HEK293 (cell line): ENCODE measurements at regions of chr10 and their contacts with region 1.

Region 1: DNA sequence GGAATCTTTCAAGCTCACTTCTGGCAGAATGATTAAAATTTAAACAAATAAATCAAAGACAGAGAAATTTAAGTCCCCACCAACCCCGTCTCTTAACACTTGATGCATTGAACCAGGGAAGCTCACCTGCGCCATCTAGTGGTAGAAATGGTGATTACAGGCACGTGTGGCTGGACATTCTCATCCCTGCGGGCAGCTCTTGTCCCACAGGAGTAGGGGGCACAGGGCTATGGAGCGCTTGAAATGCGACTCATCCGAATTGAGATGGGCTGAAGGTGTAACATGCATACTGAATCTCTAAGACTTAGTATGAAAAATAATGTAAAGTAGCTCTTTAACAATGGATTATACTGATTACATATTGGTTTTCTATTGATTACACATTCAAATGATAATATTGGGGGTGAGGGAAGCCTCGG is 24.8 kb upstream of the SLIT1 start:
- H3K4me3 ChIP-seq: no peak overlapping the region
- H3K27ac ChIP-seq: no peak overlapping the region
- H3K4me1 ChIP-seq: no peaks in the 10 kb centered on the region
- CTCF ChIP-seq: peak; percentile 72

Region 2: GRCh38 chr10:96642973-96643372 is 567.6 kb before region 1 on chr10:
- CTCF ChIA-PET with region 1: interaction called, 15 read pairs
- POLR2A ChIA-PET with region 1: no interaction called
- H3K4me3 ChIP-seq: no peak overlapping the region
- H3K27ac ChIP-seq: no peak overlapping the region
- H3K4me1 ChIP-seq: no peaks in the 10 kb centered on the region
- CTCF ChIP-seq: no peak

Region 3: DNA sequence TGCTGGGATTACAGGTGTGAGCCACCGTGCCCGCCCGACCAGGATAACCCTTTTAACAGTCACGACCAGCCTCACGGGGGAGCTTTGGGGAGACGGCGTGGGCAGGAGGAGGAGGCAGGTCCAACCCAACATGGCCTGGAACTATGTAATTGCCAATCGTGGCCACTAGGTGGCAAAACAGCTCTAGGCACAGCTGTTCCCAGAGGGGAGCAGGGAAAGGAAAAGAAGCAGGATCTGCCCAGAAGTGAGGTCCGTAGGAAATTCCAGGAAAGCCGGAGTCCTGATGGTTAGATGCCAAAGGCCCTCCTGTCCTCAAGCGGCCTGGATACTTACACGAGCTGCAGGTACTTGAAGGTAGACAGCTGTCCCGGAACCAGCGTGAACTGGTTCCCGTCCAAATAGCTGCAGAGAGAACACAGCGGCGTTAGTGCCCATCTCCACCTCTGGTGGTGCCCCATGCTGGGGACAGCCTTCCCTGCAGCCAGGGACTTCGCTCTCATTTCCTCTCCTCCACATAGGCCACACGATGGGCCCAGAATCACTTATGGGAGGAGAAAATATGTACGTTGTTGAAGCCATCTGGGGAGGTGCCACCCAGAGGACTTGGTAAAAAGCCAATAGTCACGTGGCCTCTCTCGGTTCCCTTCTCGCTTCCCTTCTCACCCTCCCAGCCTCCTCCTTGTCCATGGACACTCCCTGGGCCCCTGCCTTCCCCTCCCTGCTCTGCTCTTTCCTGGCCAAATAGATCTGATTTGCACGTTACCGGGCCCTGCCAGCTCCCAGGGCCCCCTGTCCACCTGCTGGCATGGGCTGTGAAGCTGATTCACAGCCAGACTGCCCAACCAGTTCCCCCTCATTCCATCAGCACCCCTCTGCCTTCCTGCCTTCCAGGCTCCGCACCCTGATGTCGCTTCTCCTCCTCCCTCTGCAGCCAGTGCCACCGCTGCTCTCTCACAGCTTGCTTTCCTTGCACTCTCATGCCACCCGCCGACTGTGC is 172.9 kb before region 1 on chr10:
- CTCF ChIA-PET with region 1: interaction called, 61 read pairs
- POLR2A ChIA-PET with region 1: no interaction called
- H3K4me3 ChIP-seq: no peak overlapping the region
- H3K27ac ChIP-seq: no peak overlapping the region
- H3K4me1 ChIP-seq: no peaks in the 10 kb centered on the region
- CTCF ChIP-seq: peak; percentile 96

Region 4: GRCh38 chr10:97072851-97073665 is 137.5 kb before region 1 on chr10:
- CTCF ChIA-PET with region 1: interaction called, 188 read pairs
- POLR2A ChIA-PET with region 1: no interaction called
- H3K4me3 ChIP-seq: no peak overlapping the region
- H3K27ac ChIP-seq: no peak overlapping the region
- H3K4me1 ChIP-seq: no peaks in the 10 kb centered on the region
- CTCF ChIP-seq: peak; percentile 76

Region 5: DNA sequence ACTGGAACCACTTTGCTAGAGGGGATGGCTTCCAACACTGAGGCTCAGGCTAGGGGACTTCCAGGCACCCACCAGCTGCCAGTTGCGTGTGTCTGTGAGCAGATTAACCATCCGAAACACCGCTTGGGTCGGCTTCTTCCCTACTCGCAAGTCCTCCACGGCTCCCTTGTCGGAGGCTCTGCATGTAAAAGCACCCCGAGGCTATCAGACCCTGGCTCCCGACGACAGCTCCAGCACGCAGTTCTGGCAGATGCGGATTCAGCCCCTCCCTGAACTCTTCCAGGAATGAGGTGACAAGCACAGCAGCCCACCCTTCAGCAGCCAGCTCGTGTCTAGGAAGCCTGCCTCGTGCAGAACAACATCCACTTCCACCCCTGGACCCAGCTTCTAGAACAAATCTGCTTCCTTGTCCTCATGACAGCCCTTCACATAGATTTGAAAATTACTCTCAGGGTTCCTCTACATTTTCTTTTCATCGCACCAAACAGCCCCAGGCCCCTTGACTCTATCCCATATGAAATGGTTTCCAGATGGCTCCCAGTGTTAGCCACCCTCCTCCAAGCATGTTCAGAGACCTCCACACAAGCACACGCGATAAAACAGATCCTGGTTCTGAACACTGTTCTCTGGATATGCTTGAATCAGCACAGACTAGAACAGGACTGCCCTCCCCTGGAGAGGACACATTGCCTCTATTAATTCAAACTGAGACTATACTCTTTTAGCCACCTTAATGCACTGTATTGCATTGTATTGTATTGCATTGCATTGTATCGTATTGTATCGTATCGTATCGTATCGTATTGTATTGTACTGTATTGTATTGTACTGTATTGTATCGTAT is 69.4 kb before region 1 on chr10:
- CTCF ChIA-PET with region 1: interaction called, 11 read pairs
- POLR2A ChIA-PET with region 1: no interaction called
- H3K4me3 ChIP-seq: no peak overlapping the region
- H3K27ac ChIP-seq: no peak overlapping the region
- H3K4me1 ChIP-seq: no peaks in the 10 kb centered on the region
- CTCF ChIP-seq: no peak

Region 6: DNA sequence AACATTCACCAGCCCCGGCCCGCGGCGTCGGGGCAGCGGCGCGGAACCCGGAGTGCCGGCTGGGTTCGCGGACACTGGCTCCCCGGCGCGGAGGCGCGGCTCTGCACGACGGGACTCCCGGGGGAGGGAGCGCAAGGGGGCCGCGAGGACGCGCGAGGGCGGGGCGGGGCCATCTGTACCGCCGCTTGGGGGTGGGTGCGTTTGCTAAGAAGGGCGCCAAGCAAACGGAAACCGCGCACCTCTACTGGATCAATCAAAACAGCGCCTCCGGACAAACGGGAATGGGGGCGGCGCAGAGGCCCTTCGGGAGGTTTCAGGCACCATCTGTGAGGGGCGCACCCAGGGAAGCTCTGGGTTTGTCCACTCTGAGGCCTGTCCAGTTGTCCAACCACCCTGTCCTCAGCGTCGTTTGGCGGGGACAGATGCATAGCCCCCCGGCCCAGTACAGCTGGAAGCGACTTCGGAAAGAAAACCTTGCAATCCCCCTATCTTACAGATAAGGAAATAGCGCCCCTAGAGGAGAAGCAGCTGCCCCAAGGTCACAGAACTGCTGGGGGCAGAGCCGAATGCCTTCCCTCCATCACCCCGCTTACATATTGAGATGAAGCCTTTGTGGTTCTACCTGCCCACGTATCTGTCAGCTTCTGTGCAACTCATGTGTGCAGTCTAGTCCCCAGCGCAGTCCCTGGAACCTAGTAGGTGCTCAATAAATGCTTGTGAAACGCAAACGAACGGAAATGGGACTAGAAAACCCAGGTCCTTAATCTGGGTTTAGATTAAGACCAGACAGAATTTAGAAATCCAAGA is 14.1 kb before region 1 on chr10:
- CTCF ChIA-PET with region 1: interaction called, 170 read pairs
- POLR2A ChIA-PET with region 1: no interaction called
- H3K4me3 ChIP-seq: peak overlapping the region; percentile 48
- H3K27ac ChIP-seq: no peak overlapping the region
- H3K4me1 ChIP-seq: peaks cover 3% of the 10 kb centered on the region
- CTCF ChIP-seq: peak; percentile 78

Region 7: DNA sequence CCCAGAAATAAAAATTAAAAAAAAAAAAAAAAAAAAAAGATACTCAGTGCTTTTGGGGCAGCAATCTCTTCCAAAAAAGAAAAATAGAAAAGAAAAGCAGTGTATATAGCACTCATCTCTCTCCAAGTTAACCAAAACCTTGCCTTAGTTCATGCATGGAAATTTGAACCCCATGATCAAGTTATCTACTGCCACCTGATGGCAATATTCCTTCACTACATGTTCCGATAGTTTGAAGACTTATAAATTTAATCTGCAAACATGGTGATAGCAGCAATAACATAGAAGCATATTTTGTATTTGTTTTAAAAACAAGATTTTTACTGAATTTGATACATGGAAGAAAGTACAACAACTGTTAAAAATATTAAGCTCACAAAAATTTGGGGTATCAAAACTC is 23.8 kb after region 1 on chr10:
- CTCF ChIA-PET with region 1: interaction called, 38 read pairs
- POLR2A ChIA-PET with region 1: no interaction called
- H3K4me3 ChIP-seq: no peak overlapping the region
- H3K27ac ChIP-seq: no peak overlapping the region
- H3K4me1 ChIP-seq: no peaks in the 10 kb centered on the region
- CTCF ChIP-seq: 0 out of 2 replicates have a peak, but pooled peaks have one; percentile 21

Region 8: GRCh38 chr10:97407211-97407951 is 196.8 kb after region 1 on chr10:
- CTCF ChIA-PET with region 1: no interaction called
- POLR2A ChIA-PET with region 1: no interaction called
- H3K4me3 ChIP-seq: peak overlapping the region; percentile 15; the same call in 1 of the 2 replicates
- H3K27ac ChIP-seq: no peak overlapping the region
- H3K4me1 ChIP-seq: no peaks in the 10 kb centered on the region
- CTCF ChIP-seq: peak; percentile 90

Region 9: DNA sequence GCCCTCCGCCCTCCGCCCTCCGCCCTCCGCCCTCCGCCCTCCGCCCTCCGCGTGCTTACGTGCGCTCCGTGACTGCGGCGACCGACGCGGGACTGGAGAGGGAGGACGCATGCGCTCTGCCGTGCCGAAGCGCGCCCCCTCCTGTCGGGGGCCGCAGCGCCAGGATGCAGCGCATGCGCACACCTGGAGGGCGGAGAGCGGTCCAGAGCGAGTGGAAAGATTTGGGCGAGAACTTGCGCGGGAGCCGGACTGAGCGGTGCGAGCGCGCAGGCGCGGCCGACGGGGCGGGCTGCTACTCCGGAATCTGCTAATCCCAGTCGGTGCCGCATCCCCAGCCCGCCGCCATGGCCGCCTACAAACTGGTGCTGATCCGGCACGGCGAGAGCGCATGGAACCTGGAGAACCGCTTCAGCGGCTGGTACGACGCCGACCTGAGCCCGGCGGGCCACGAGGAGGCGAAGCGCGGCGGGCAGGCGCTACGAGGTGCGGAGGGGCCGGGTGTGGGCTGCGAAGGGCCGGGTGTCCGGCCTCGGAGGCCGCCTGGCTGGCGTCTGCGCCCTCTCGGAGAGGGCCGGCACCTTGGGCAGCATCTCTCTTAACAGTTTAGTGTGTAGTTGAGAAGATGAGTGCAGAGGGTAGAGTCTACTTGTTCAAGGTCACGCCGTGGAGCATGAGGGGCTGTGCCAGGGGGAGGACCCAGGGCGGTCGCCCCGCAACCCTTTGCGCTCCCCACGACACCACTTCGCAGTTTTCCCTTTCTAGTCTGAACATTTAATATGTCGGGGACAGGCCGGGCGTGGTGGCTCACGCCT is 215.6 kb after region 1 on chr10 and contains the start of gene PGAM1:
- CTCF ChIA-PET with region 1: no interaction called
- POLR2A ChIA-PET with region 1: no interaction called
- H3K4me3 ChIP-seq: peak within 1 kb of the TSS; percentile 87
- H3K27ac ChIP-seq: peak within 1 kb of the TSS; percentile 96
- H3K4me1 ChIP-seq: no peaks in the 10 kb centered on the region; the same call in 1 of the 2 replicates
- CTCF ChIP-seq: peak; percentile 99